MCF 10A (cell line): ENCODE measurements at regions of chr4 and their contacts with region 1.

Region 1: DNA sequence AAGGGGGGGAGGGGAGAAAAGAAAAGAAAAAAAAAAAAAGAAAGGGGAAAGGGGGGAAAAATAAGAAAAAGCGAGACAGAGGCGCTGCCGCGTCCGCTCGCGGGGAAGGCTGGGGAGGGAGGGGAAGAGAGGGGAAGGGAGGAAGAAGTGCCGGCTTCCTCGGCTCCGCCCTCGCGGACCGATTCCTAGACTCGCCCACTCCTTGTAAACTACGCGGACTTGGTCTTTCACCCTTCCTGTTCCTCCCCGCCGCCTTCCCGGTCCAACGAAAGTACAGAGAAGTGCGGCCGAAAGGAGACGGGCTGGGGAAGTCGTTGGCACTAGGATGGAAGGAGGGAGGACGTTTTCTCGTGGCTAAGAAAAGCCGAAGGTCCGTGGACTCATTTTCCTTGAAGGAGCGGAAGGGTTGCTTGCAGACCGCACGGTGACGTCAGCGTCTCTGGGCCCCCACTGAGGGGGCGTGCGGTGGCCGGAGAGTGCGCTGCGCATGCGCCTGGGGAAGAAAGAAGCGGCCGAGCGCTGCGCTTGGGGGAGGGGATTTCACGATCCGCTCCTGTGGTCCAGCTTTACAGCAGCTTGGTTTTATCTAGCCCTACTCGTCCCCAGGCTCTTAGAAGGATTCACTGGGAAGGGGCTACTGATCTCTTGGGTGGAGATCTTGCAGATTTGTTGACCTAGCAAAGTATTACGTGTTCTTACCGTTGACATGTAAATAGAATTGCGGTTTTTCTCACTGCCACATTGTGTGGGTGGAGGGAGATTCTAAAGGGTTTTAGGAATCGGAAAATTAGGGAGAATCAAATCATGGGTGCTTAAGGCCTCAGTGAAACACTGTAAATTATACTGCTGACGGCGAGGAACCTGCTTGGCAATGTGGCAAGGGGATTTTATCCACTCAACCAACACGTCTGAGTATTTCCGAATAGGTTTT is at the start of gene CCNI:
- DNase-seq: peak; percentile 95
- H3K4me3 Mint-ChIP-seq: no peak within 1 kb of the TSS
- H3K27ac Mint-ChIP-seq: no peak within 1 kb of the TSS
- H3K4me1 Mint-ChIP-seq: peaks cover 13% of the 10 kb centered on the region
- H3K27me3 Mint-ChIP-seq: no peaks in the 10 kb centered on the region
- CTCF ChIP-seq: no peak
- total RNA-seq, gene CCNI: 297 and 368 TPM in 2 replicates

Region 2: DNA sequence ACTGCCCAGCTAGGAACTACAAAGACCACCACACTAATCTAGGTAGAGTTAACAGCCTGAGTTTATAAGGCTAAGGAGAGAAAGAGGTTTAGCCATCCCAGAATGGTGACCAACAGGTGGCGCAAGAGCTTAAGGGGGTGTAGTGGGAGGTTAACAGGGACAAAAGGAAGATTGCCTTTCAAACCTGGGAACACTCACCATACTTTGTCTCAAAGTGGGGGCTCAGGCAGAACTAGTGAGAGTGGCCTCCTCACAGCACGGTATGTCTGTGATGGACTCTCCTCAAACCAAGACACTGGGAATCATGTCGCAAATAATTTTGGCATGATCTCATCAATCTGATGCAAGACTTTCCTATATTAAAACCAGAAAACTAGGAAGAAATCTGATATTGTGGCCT is 23.8 kb before region 1 on chr4:
- CTCF ChIA-PET with region 1: interaction called, 4 read pairs
- POLR2A ChIA-PET with region 1: interaction called, 15 read pairs
- intact Hi-C with region 1: no loop called
- DNase-seq: peak; percentile 75
- H3K4me3 Mint-ChIP-seq: no peak overlapping the region
- H3K27ac Mint-ChIP-seq: peak overlapping the region; percentile 61
- H3K4me1 Mint-ChIP-seq: peaks cover 21% of the 10 kb centered on the region
- H3K27me3 Mint-ChIP-seq: no peaks in the 10 kb centered on the region
- CTCF ChIP-seq: peak; percentile 45

Region 3: GRCh38 chr4:77095101-77095821 is 19.1 kb after region 1 on chr4:
- CTCF ChIA-PET with region 1: interaction called, 9 read pairs
- POLR2A ChIA-PET with region 1: interaction called, 73 read pairs
- intact Hi-C with region 1: no loop called
- DNase-seq: peak; percentile 70
- H3K4me3 Mint-ChIP-seq: no peak overlapping the region
- H3K27ac Mint-ChIP-seq: peak overlapping the region; percentile 16
- H3K4me1 Mint-ChIP-seq: peaks cover 24% of the 10 kb centered on the region
- H3K27me3 Mint-ChIP-seq: no peaks in the 10 kb centered on the region
- CTCF ChIP-seq: peak; percentile 58

Region 4: DNA sequence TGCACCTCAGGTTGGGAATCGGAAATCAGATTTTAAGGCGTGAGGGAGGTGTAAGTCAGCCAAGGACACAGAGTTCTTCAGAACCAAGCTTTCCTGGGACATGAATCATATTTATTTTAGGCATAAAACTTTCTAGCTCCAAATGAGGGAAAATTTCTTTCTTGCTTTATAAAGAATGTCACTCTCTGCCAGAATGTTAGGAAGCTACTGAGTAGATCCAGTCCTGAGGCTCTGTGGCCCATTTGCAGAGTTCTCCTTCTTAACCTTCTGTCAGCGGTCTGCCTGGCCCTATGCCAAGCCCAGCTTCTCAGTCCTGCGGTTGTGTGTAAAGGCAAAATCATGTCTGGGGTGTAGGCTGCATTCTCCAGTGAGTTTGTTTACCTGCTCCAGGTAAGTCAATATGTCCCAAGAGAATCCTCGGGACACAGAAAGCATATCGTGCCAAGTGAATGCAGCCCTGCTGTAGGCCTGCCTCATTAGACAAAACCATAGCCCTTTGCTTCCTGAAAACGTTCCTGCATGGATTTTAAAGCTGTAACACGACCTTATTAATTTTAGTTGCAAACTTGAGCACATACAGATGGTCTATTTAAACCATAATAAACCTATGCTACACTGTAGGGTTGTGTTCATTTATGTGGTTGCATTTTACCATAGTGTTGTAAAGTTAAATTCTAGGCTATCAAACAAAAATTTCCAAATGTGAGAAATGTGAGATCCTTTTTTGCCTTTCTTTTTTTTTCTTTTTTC is 28.8 kb after region 1 on chr4:
- CTCF ChIA-PET with region 1: interaction called, 6 read pairs
- POLR2A ChIA-PET with region 1: interaction called, 29 read pairs
- intact Hi-C with region 1: no loop called
- DNase-seq: peak; percentile 58
- H3K4me3 Mint-ChIP-seq: peak overlapping the region; percentile 56
- H3K27ac Mint-ChIP-seq: peak overlapping the region; percentile 90
- H3K4me1 Mint-ChIP-seq: peaks cover 14% of the 10 kb centered on the region
- H3K27me3 Mint-ChIP-seq: no peaks in the 10 kb centered on the region
- CTCF ChIP-seq: no peak

Region 5: GRCh38 chr4:77110730-77111129 is 34.6 kb after region 1 on chr4:
- CTCF ChIA-PET with region 1: no interaction called
- POLR2A ChIA-PET with region 1: interaction called, 14 read pairs
- intact Hi-C with region 1: no loop called
- DNase-seq: peak; percentile 55
- H3K4me3 Mint-ChIP-seq: no peak overlapping the region
- H3K27ac Mint-ChIP-seq: no peak overlapping the region
- H3K4me1 Mint-ChIP-seq: peaks cover 10% of the 10 kb centered on the region
- H3K27me3 Mint-ChIP-seq: no peaks in the 10 kb centered on the region
- CTCF ChIP-seq: no peak

Region 6: GRCh38 chr4:77146186-77147078 is 70.3 kb after region 1 on chr4:
- CTCF ChIA-PET with region 1: no interaction called
- POLR2A ChIA-PET with region 1: interaction called, 17 read pairs
- intact Hi-C with region 1: no loop called
- DNase-seq: peak; percentile 48
- H3K4me3 Mint-ChIP-seq: peak overlapping the region; percentile 44
- H3K27ac Mint-ChIP-seq: peak overlapping the region; percentile 68
- H3K4me1 Mint-ChIP-seq: peaks cover 26% of the 10 kb centered on the region
- H3K27me3 Mint-ChIP-seq: no peaks in the 10 kb centered on the region
- CTCF ChIP-seq: no peak